Heart left ventricle (tissue), 16 donors: ENCODE measurements at regions of chr6 and their contacts with region 1.

Region 1: DNA sequence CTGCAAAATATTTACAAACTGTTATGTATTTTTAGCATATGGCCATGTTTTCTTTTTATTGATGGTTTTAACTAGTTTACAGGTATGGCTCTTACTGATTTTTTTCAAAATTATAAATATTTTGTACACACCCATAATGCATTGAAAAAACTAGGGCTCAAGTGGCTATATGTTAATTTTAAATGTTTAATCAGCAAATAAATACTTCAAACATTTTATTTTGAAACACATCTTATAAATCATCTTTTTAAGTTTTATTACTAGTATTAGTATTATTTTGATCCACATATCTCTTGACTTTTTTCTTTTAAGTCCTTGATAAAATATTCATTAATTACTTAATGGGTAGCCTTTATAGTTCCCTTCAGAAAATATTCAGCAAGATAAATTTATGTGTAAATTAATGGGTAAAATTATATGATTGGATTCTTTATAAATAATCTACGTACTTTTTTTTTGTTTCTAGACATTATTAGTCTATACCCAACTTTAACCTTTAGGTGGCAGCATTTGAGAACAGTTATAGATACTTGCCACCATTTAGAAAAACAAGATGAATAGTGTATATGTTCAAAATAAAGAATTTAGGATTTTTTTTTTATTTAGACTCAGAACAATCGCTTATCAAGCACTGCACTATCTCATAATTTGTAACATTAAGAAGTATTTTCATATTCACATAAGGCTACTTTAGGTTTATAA is 241.9 kb downstream of the ADGRB3 start:
- DNase-seq: no peak
- ATAC-seq: no peak
- H3K4me3 ChIP-seq: no peak overlapping the region
- H3K27ac ChIP-seq: no peak overlapping the region
- H3K4me1 ChIP-seq: no peaks in the 10 kb centered on the region
- H3K27me3 ChIP-seq: no peaks in the 10 kb centered on the region
- CTCF ChIP-seq: peak; percentile 21 to 62 (median 46)
- POLR2A ChIP-seq: no peak

Region 2: DNA sequence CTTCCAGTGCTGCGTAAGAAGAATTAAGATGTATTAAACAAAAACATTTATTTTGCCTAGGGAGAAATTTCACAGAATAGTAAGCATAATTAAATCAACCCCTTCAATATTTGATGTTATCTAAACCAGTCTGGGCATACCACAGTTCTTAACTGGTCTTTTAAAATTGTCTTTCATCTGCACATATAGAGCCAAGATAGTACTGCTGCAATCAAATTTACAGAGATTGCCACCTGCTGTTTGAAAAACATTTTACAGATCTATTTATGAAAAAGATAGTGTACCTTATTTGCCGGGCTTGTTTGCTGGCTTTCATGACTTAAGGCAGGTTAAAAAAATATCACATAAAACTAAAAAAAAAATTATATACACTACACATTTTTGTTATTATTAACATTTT is 81.4 kb after region 1 on chr6:
- intact Hi-C with region 1: loop called in 2 of 10 experiments (anchors 10 kb)
- DNase-seq: no peak
- ATAC-seq: no peak
- H3K4me3 ChIP-seq: no peak overlapping the region
- H3K27ac ChIP-seq: no peak overlapping the region
- H3K4me1 ChIP-seq: no peaks in the 10 kb centered on the region
- H3K27me3 ChIP-seq: no peaks in the 10 kb centered on the region
- CTCF ChIP-seq: peak in 5 of 12 donors; percentile 18 to 37 (median 35)
- POLR2A ChIP-seq: no peak

Region 3: DNA sequence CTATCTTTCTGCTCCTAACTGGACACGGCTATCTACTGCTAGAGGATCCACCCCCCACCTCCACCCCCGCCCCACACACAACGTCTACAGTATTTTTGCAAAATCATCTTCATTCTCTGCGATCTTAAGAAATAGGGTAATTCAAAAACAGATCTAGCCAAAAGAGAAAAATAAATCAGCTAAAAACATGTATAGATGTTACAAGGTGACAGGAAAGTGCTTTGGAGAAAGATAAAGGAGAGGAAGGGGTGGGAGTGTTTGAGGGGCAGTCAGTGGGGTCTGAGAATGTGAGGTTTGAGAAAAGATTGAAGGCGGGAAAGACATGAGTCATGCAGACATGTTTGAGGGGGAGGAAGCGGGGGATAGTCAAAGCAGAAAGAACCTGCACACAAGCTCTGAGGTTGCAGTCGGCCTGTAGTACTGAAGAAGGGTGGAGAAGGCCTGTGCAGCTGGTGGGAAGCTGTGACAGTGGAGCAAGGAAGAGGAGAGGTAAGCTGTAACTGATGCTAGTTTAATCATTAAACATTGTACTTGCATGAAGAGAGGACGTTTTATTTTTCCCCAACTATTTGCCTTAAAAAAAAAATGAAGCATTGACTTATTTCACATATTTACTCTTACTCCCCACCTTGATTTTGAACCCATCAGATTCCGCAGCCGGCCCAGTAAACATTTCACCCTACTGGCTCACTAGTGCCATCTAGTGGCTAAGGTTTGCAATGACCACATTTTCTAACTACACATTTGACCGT is 90.8 kb after region 1 on chr6:
- intact Hi-C with region 1: loop called in 4 of 10 experiments (anchors 5 to 10 kb)
- DNase-seq: peak in 4 of 5 donors; percentile 47 to 63 (median 51)
- ATAC-seq: peak in 3 of 4 donors; percentile 57 to 74 (median 63)
- H3K4me3 ChIP-seq: no peak overlapping the region
- H3K27ac ChIP-seq: no peak overlapping the region
- H3K4me1 ChIP-seq: peaks cover 0 to 5% (median 0%) of the 10 kb centered on the region in 12 donors
- H3K27me3 ChIP-seq: no peaks in the 10 kb centered on the region
- CTCF ChIP-seq: peak; percentile 79 to 92 (median 88)
- POLR2A ChIP-seq: no peak

Region 4: DNA sequence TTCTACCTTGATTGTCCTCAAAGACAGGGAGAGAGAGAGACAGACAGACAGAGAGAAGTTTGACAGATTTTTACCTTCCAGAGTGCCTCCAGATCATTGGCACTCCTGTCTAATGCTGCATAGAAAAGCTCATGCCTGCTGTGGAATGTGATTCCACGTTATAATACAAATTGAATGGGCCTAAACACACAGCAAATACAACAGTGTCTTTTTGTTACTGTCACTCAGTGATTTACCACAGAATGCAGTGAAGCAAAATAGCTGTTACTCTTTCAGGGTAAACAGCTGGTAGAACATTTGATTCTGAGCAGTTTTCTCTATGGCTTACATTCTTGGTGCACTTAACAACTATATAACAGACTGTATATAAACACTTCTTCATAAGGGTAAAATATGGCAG is 361.1 kb after region 1 on chr6:
- intact Hi-C with region 1: no loop called
- DNase-seq: no peak
- ATAC-seq: no peak
- H3K4me3 ChIP-seq: no peak overlapping the region
- H3K27ac ChIP-seq: no peak overlapping the region
- H3K4me1 ChIP-seq: no peaks in the 10 kb centered on the region
- H3K27me3 ChIP-seq: no peaks in the 10 kb centered on the region
- CTCF ChIP-seq: no peak
- POLR2A ChIP-seq: no peak

Region 5: DNA sequence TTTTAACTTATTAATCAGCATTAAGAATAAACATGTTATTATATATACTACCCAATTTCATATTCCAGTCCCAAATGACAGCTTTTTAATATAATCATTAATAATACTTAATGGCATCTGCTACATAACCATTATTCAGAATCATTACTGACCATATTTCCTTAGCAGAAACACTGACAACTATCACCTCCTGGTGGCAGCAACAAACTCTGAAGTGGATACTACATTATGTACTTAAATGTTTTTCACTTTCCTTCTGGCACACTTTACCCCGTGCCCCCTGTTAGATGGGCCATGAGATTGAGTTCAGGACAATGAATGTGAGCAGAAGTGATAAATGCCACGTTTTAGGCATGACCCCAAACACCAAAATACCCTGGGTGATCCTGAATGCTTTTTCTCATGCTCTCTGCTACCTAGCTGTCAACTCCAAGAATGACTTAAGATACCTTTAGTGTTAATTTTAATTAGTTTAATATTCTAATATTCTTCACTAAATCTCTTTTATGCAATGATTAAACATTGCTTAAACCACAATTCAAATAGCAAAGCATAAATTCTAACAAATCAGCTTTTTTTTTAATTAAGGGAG is 842.8 kb after region 1 on chr6:
- intact Hi-C with region 1: loop called in 4 of 10 experiments (anchors 5 to 10 kb)
- DNase-seq: no peak
- ATAC-seq: no peak
- H3K4me3 ChIP-seq: no peak overlapping the region
- H3K27ac ChIP-seq: no peak overlapping the region
- H3K4me1 ChIP-seq: no peaks in the 10 kb centered on the region
- H3K27me3 ChIP-seq: no peaks in the 10 kb centered on the region
- CTCF ChIP-seq: peak in 7 of 12 donors; percentile 17 to 46 (median 28)
- POLR2A ChIP-seq: no peak